ENCODE measurements at regions of chr1 and their contacts with region 1.

Region 1: DNA sequence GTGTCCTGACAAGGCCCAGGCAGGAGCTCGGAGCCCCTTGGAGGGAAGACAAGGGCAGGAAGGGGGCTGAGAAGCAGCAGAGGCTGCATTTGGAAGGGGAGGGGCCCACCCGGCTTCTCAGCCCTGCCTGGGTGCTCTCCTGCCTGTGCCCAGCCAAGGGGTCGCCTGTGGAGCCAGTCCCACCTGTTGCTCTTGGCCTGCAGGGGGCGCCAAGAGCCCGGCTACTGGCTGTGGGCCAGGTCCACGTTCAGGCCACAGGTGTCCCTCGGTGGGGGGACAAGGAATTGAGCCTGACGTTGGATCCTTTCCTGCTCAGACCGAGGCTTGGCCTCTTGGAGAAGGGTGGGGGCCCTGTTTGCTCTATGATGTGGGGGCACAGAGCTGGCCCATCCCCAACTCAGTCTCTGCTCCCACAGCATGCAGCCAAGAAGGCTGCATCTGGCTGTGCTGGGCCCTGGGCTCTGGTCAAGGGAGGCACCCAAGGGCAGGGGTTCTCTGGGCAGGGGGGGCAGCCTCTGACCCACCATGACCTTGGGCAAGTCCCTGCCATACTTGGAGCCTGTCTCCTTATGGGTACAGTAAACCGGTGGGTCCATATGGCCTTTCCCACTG is 10.9 kb downstream of the WNT4 start:
- DNase-seq: no peak
- H3K4me3 ChIP-seq: no peak overlapping the region
- CTCF ChIP-seq: no peak
- POLR2A ChIP-seq: no peak

Region 2: GRCh38 chr1:22275721-22276395 is 143.9 kb after region 1 on chr1:
- intact Hi-C with region 1: loop called (anchors 10 kb)
- DNase-seq: peak; percentile 33 to 91
- H3K4me3 ChIP-seq: no peak overlapping the region
- CTCF ChIP-seq: no peak
- POLR2A ChIP-seq: no peak